ENCODE measurements at regions of chr1 and their contacts with region 1.

Region 1: DNA sequence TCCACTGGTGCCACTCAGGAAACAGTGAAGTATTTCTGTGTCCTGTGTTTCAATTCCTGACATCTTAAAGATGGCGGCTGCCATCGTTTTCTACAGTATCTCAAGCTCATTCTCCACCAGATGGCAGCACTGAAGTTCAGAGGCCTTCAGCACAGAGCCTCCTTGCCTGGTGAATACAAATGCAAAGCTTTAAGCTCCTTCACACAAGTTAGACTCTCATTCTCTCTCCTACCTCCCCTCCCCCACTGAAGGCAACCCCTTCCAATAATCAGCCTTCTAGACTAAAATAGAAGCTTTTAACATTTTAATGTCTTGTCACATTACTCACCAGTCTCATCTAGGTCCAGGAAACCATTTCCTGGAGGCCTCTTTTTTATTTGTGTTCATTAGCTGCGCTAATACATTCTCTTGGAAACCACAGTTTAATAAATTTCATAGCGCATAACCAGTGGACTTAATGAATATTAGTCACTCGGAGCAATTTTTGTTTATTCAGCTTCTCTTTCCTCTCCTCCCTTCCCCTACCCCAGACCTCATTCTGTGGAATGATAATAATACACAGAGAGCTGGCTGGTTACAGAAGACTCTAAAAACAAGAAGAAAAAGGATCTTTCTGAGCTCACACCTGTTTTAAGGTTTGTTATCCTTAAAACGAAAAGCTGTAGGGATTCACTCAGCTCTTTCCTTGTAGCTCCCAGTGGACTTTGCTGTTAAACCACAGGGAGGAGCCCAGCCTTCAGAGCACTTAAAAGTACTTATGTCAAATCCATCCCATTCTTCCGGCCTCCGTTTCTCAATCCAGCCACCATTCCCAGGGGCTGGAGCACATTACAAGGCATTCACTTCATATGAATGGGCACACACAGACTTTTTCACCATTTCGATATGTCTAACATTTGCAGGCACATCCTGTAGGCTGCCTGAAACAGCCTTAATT is 384.9 kb downstream of the HLX start:
- DNase-seq: peak; percentile 58
- ATAC-seq: peak; percentile 67
- H3K4me3 Mint-ChIP-seq: no peak overlapping the region
- H3K27ac Mint-ChIP-seq: no peak overlapping the region
- H3K4me1 Mint-ChIP-seq: no peaks in the 10 kb centered on the region
- H3K27me3 Mint-ChIP-seq: no peaks in the 10 kb centered on the region

Region 2: DNA sequence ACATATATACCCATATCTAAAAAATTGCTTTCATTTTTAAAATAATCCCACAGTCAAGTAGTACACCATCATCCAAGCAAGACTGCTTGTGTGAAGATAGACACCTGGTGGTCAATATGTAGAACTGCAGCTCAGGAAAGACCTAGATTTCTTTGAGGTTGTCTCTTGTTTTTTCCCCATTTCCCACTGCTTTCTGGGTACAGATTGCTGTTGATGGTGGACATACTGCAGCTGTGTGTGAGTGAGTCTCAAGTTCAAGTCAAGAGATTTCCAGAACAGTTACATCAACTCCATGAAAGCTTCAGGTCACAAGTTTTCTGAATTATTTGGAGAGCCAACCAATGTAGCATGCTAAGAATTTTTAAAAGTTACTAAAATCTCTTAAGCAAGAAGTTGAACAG is 171.4 kb after region 1 on chr1:
- CTCF ChIA-PET with region 1: interaction called, 38 read pairs
- POLR2A ChIA-PET with region 1: no interaction called
- DNase-seq: no peak
- ATAC-seq: peak; percentile 59
- H3K4me3 Mint-ChIP-seq: no peak overlapping the region
- H3K27ac Mint-ChIP-seq: no peak overlapping the region
- H3K4me1 Mint-ChIP-seq: peaks cover 21% of the 10 kb centered on the region
- H3K27me3 Mint-ChIP-seq: peaks cover 7% of the 10 kb centered on the region

Region 3: GRCh38 chr1:221683681-221684080 is 419.6 kb after region 1 on chr1:
- CTCF ChIA-PET with region 1: no interaction called
- POLR2A ChIA-PET with region 1: no interaction called
- DNase-seq: no peak
- ATAC-seq: no peak
- H3K4me3 Mint-ChIP-seq: no peak overlapping the region
- H3K27ac Mint-ChIP-seq: no peak overlapping the region
- H3K4me1 Mint-ChIP-seq: peaks cover 11% of the 10 kb centered on the region
- H3K27me3 Mint-ChIP-seq: no peaks in the 10 kb centered on the region